ENCODE measurements at regions of chr12 and their contacts with region 1.

Region 1: GRCh38 chr12:120104924-120105323 is 11.6 kb downstream of the RAB35 start:
- DNase-seq: no peak

Region 2: GRCh38 chr12:119956018-119956417 is 148.9 kb before region 1 on chr12:
- CTCF ChIA-PET with region 1: no interaction called
- POLR2A ChIA-PET with region 1: no interaction called
- DNase-seq: no peak

Region 3: DNA sequence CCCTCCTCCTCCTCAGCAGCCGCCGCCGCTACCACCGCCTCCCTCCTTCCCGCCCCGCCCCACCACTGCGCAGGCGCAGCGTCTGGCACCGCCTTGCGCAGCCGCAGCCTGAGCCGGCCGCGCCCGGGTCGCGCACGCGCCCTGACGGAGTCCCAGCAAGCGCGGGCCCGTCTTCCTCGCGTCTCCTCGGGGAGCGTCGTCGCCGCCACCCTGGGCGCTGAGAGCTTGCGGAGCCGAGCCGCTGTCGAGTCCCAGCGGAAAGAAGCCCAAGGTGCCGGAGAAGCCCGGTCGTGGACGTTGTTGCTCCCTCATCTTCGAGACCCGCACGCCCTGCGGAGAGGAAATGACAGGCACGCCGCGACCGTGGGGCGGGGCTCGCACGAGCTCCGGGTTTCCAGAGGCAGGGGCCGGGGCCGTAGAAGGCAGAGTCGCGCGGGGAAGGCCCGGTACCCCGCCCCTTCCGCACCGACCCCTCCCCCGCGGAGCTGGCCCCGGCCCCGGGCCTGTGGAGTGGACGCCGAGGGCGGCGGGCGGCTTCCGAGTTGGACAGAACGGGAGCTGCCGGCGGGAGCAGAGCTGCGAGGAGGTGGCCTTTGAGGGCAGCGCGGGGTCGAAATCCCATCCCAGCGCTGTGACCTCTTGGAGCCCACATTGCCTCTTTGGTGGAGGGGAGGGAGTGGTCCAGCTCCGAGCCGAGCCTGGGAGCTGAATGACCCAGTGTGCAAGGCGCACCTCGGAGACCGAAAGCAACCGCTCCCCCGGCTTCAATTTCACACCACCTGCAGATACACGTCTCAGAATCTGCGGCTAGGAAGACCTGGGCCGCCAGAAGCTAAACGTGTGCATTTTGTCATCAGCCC is 12.1 kb after region 1 on chr12:
- CTCF ChIA-PET with region 1: no interaction called
- POLR2A ChIA-PET with region 1: interaction called, 15 read pairs
- DNase-seq: peak; percentile 98

Measured in HEK293T (cell line).